Caco-2 (cell line): ENCODE measurements at regions of chr5 and their contacts with region 1.

Region 1: GRCh38 chr5:126490167-126490940 is 67.1 kb downstream of the GRAMD2B start:
- DNase-seq: no peak
- H3K4me3 ChIP-seq: no peak overlapping the region
- H3K4me3 Mint-ChIP-seq: no peak overlapping the region
- H3K27ac Mint-ChIP-seq: no peak overlapping the region
- H3K4me1 ChIP-seq: no peaks in the 10 kb centered on the region
- H3K4me1 Mint-ChIP-seq: no peaks in the 10 kb centered on the region
- H3K27me3 ChIP-seq: no peaks in the 10 kb centered on the region
- H3K27me3 Mint-ChIP-seq: no peaks in the 10 kb centered on the region
- CTCF ChIP-seq: peak; percentile 5 to 15

Region 2: GRCh38 chr5:126354012-126354857 is 136.1 kb before region 1 on chr5:
- CTCF ChIA-PET with region 1: interaction called, 3 read pairs
- POLR2A ChIA-PET with region 1: no interaction called
- intact Hi-C with region 1: loop called (anchors 1 kb)
- DNase-seq: peak in 1 of 2 experiments; percentile 33
- H3K4me3 ChIP-seq: no peak overlapping the region
- H3K4me3 Mint-ChIP-seq: no peak overlapping the region
- H3K27ac Mint-ChIP-seq: no peak overlapping the region
- H3K4me1 ChIP-seq: peaks cover 11% of the 10 kb centered on the region
- H3K4me1 Mint-ChIP-seq: peaks cover 6% of the 10 kb centered on the region
- H3K27me3 ChIP-seq: no peaks in the 10 kb centered on the region
- H3K27me3 Mint-ChIP-seq: no peaks in the 10 kb centered on the region
- CTCF ChIP-seq: peak; percentile 47 to 57

Region 3: DNA sequence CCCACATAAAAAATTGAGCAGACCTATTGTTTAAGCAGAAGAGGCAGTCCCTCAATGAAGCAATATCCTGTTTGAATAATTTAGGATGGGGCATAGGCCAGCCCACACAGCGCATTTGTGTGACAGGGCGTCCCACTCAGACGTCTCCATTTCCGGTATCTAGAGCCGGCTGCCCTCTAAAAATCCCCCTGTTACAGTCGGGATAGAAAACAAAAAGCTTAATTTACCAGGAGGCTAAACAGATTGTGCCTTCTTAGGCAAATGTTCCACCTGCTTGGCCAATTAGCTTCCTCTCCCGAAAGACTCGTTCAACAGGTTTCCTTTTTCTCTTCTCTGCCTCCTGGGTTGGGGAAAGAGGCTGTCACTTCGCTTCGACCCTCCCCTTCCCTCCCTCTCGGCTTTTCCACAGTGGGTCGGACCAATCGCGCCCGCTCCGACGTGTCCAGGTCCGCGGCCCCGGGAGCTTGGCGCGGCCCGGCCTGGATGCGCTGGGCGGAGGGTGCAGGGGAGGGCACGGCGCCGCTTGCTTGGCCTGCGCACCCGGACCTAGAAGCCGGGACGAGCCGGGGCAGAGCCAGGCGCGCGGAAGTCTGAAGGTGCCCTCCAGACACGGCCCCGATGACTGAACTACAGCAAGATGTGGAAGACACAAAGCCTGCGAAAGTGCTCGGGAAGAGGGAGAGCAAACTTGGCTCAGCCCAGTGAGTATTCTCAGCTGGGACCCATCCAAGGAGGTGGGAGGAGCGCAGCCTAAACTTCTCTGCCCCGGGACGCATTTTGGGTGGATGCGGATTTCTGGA is 67.2 kb before region 1 on chr5 and contains the start of gene GRAMD2B:
- CTCF ChIA-PET with region 1: no interaction called
- POLR2A ChIA-PET with region 1: no interaction called
- intact Hi-C with region 1: loop called (anchors 2 kb)
- DNase-seq: peak; percentile 79 to 86
- H3K4me3 ChIP-seq: peak within 1 kb of the TSS; percentile 40
- H3K4me3 Mint-ChIP-seq: peak within 1 kb of the TSS; percentile 84
- H3K27ac Mint-ChIP-seq: peak within 1 kb of the TSS; percentile 36
- H3K4me1 ChIP-seq: no peaks in the 10 kb centered on the region
- H3K4me1 Mint-ChIP-seq: no peaks in the 10 kb centered on the region
- H3K27me3 ChIP-seq: no peaks in the 10 kb centered on the region
- H3K27me3 Mint-ChIP-seq: no peaks in the 10 kb centered on the region
- CTCF ChIP-seq: no peak
- total RNA-seq, gene GRAMD2B: 3.0 TPM in 2 replicates

Region 4: GRCh38 chr5:126462239-126463014 is 27.9 kb before region 1 on chr5:
- CTCF ChIA-PET with region 1: no interaction called
- POLR2A ChIA-PET with region 1: no interaction called
- intact Hi-C with region 1: loop called (anchors 2 kb)
- DNase-seq: no peak
- H3K4me3 ChIP-seq: no peak overlapping the region
- H3K4me3 Mint-ChIP-seq: no peak overlapping the region
- H3K27ac Mint-ChIP-seq: no peak overlapping the region
- H3K4me1 ChIP-seq: peaks cover 9% of the 10 kb centered on the region; the same call in 1 of the 2 replicates
- H3K4me1 Mint-ChIP-seq: peaks cover 23% of the 10 kb centered on the region
- H3K27me3 ChIP-seq: no peaks in the 10 kb centered on the region
- H3K27me3 Mint-ChIP-seq: no peaks in the 10 kb centered on the region
- CTCF ChIP-seq: no peak

Region 5: DNA sequence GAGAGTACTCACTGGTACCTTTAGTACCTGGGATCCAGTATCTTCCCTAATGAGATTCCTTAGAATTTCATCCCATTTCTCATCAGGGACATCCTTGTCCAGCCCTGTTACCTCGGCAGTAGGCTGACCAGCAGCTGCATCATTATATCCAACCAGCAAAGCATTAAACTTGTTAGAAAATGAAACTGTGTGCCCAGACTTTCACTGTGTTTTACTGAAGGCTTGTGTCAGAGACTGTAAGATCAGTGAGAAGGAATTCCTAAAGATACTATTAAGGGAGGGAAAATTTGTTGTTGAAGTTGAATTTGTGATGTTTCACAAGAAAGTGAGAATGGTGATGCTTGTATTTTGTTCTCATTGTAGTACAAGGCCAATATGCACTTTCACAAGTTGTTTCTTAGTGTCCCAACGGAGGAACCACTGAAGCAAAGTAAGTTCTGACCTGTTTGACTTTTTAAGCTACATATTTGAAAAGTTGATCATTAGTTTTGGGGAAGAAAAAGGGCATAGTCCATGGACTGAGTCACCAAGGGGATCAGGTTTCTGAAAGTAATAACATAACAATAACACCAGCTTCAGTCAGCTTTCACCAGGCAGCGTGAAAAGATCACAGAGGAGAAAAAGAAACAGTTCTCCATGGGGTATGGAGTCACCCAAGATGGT is 18.3 kb before region 1 on chr5:
- CTCF ChIA-PET with region 1: no interaction called
- POLR2A ChIA-PET with region 1: no interaction called
- intact Hi-C with region 1: loop called (anchors 2 kb)
- DNase-seq: peak in 1 of 2 experiments; percentile 42
- H3K4me3 ChIP-seq: 0 out of 2 replicates have a peak overlapping the region, but pooled peaks have one; percentile 1
- H3K4me3 Mint-ChIP-seq: peak overlapping the region; percentile 9
- H3K27ac Mint-ChIP-seq: peak overlapping the region; percentile 43
- H3K4me1 ChIP-seq: peaks cover 45% of the 10 kb centered on the region
- H3K4me1 Mint-ChIP-seq: peaks cover 10% of the 10 kb centered on the region
- H3K27me3 ChIP-seq: no peaks in the 10 kb centered on the region
- H3K27me3 Mint-ChIP-seq: no peaks in the 10 kb centered on the region
- CTCF ChIP-seq: no peak

Region 6: DNA sequence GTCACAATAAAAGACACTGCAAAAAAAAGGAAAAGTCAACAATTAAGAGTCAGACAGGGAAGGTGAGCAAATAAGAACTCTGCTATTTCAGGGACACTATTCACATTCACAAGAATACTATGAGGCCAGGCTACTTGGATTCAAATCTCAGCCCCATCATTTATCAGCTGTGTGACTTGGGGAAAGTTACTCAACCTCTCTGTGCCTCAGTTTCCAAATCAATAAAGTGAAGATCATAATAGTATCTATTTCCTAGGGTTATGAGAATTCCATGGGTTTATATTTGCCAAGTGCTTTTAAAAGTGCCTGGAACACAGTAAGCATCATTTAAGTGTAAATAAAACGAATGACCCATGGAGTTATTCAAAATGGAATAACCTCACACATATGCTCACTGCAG is 48.2 kb after region 1 on chr5:
- CTCF ChIA-PET with region 1: no interaction called
- POLR2A ChIA-PET with region 1: no interaction called
- intact Hi-C with region 1: loop called (anchors 2 kb)
- DNase-seq: no peak
- H3K4me3 ChIP-seq: no peak overlapping the region
- H3K4me3 Mint-ChIP-seq: no peak overlapping the region
- H3K27ac Mint-ChIP-seq: no peak overlapping the region
- H3K4me1 ChIP-seq: no peaks in the 10 kb centered on the region
- H3K4me1 Mint-ChIP-seq: no peaks in the 10 kb centered on the region
- H3K27me3 ChIP-seq: no peaks in the 10 kb centered on the region
- H3K27me3 Mint-ChIP-seq: no peaks in the 10 kb centered on the region
- CTCF ChIP-seq: no peak